ENCODE measurements at regions of chr3 and their contacts with region 1.

Region 1: DNA sequence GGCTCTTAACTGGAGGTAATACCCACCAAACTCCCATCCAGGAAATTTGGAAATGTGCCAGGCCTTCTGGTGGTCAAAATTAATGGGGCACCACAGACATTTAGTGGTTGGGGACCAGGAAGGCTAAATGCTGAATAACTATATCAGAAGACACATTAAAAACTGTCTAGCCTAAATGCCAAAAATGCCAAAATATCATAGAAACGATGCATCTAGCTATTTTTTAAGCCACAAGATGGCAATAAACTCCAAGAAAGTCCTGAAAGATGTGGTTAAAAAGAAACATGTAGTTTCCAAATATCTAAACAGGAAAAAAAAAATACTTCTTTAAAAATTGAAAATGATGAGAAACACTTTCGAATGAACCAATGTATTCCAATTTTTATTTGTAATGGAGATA is 19.9 kb downstream of the CCDC14 start:
- DNase-seq: no peak
- ATAC-seq: no peak
- H3K4me3 ChIP-seq: no peak overlapping the region
- H3K4me3 Mint-ChIP-seq: no peak overlapping the region
- H3K27ac ChIP-seq: no peak overlapping the region
- H3K27ac Mint-ChIP-seq: no peak overlapping the region
- H3K4me1 ChIP-seq: no peaks in the 10 kb centered on the region
- H3K4me1 Mint-ChIP-seq: no peaks in the 10 kb centered on the region
- H3K27me3 ChIP-seq: no peaks in the 10 kb centered on the region
- H3K27me3 Mint-ChIP-seq: no peaks in the 10 kb centered on the region
- CTCF ChIP-seq: no peak

Region 2: DNA sequence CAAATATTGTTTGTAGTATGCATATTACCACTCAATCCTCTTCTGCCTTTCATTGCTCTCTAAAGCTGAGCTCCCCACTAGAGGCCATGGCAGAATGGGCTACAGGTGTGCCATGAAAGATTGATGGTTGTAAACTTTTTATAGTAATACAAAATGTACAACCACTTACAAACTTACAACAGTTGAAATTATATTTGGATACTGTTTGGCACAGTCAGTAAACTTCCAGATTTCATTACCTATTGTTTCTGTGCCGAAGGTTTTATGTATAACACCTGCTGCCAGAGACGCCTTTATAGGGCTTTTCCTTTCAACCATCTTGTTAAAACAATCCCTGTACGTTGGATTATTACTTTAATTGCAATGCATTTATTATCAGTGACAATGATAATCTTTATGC is 43.8 kb after region 1 on chr3:
- CTCF ChIA-PET with region 1: interaction called, 3 read pairs
- POLR2A ChIA-PET with region 1: no interaction called
- intact Hi-C with region 1: loop called in 1 of 2 experiments (anchors 5 kb)
- DNase-seq: no peak
- ATAC-seq: no peak
- H3K4me3 ChIP-seq: no peak overlapping the region
- H3K4me3 Mint-ChIP-seq: no peak overlapping the region
- H3K27ac ChIP-seq: no peak overlapping the region
- H3K27ac Mint-ChIP-seq: no peak overlapping the region
- H3K4me1 ChIP-seq: peaks cover 4% of the 10 kb centered on the region
- H3K4me1 Mint-ChIP-seq: peaks cover 2% of the 10 kb centered on the region
- H3K27me3 ChIP-seq: peaks cover 0 to 5% of the 10 kb centered on the region in 2 experiments
- H3K27me3 Mint-ChIP-seq: peaks cover 48% of the 10 kb centered on the region
- CTCF ChIP-seq: no peak

Region 3: DNA sequence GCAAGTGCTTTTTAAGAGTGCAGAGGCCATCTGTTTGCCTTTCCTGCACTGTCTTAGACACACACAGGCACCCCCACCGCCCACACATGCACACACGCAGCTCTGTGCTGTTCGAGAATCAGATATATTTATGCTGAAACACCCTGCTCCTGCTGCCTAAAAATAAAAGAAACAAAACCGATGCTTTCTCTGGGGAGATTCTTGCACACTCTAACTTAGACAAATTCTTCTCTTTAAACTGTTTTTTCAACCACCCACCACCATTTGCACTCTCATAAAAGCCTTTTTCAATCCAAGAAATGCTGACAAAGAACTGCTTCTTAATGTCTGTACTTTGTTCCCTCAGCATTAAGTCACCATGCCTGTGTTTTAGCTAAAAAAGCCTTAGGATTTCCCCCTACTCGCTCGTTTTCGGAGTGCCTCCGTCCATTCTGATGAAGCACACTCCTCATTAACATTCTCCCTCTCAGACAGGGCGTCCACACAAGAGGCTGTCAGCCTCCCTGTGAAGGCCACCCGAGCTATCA is 1245.2 kb after region 1 on chr3:
- CTCF ChIA-PET with region 1: no interaction called
- POLR2A ChIA-PET with region 1: no interaction called
- intact Hi-C with region 1: no loop called
- DNase-seq: peak in 1 of 9 experiments; percentile 25
- ATAC-seq: no peak
- H3K4me3 ChIP-seq: no peak overlapping the region
- H3K4me3 Mint-ChIP-seq: no peak overlapping the region
- H3K27ac ChIP-seq: no peak overlapping the region
- H3K27ac Mint-ChIP-seq: no peak overlapping the region
- H3K4me1 ChIP-seq: no peaks in the 10 kb centered on the region
- H3K4me1 Mint-ChIP-seq: no peaks in the 10 kb centered on the region
- H3K27me3 ChIP-seq: no peaks in the 10 kb centered on the region
- H3K27me3 Mint-ChIP-seq: no peaks in the 10 kb centered on the region
- CTCF ChIP-seq: no peak